ENCODE measurements at regions of chr17 and their contacts with region 1.

Region 1: GRCh38 chr17:33725675-33726271 is 432.7 kb upstream of the ASIC2 start:
- DNase-seq: no peak
- H3K4me3 ChIP-seq: no peak overlapping the region
- CTCF ChIP-seq: peak; percentile 81

Region 2: GRCh38 chr17:33651686-33652085 is 74.1 kb before region 1 on chr17:
- CTCF ChIA-PET with region 1: no interaction called
- POLR2A ChIA-PET with region 1: no interaction called
- DNase-seq: no peak
- H3K4me3 ChIP-seq: no peak overlapping the region
- CTCF ChIP-seq: no peak

Region 3: GRCh38 chr17:33750943-33751701 is 25.3 kb after region 1 on chr17:
- CTCF ChIA-PET with region 1: interaction called, 23 read pairs
- POLR2A ChIA-PET with region 1: no interaction called
- DNase-seq: peak; percentile 3
- H3K4me3 ChIP-seq: peak overlapping the region; percentile 36; the same call in 1 of the 2 replicates
- CTCF ChIP-seq: peak; percentile 83

Measured in AG04449 (cell line).